Heart left ventricle (tissue), 16 donors: ENCODE measurements at regions of chr13 and their contacts with region 1.

Region 1: GRCh38 chr13:33610471-33611015 is 207.4 kb upstream of the RFC3 start:
- DNase-seq: peak; percentile 64 to 89 (median 85)
- ATAC-seq: peak; percentile 86 to 88 (median 87)
- H3K4me3 ChIP-seq: peak overlapping the region in 11 of 12 donors; percentile 3 to 54 (median 40)
- H3K27ac ChIP-seq: peak overlapping the region; percentile 85 to 98 (median 92)
- H3K4me1 ChIP-seq: peaks cover 0 to 55% (median 27%) of the 10 kb centered on the region in 12 donors
- H3K27me3 ChIP-seq: no peaks in the 10 kb centered on the region
- CTCF ChIP-seq: peak in 4 of 12 donors; percentile 11 to 38 (median 19)
- POLR2A ChIP-seq: no peak

Region 2: GRCh38 chr13:33548069-33548468 is 62.5 kb before region 1 on chr13:
- intact Hi-C with region 1: loop called in 2 of 10 experiments (anchors 5 kb)
- DNase-seq: no peak
- ATAC-seq: no peak
- H3K4me3 ChIP-seq: no peak overlapping the region
- H3K27ac ChIP-seq: peak overlapping the region in 1 of 12 donors; percentile 40
- H3K4me1 ChIP-seq: peaks cover 0 to 32% (median 13%) of the 10 kb centered on the region in 12 donors
- H3K27me3 ChIP-seq: no peaks in the 10 kb centered on the region
- CTCF ChIP-seq: no peak
- POLR2A ChIP-seq: no peak

Region 3: DNA sequence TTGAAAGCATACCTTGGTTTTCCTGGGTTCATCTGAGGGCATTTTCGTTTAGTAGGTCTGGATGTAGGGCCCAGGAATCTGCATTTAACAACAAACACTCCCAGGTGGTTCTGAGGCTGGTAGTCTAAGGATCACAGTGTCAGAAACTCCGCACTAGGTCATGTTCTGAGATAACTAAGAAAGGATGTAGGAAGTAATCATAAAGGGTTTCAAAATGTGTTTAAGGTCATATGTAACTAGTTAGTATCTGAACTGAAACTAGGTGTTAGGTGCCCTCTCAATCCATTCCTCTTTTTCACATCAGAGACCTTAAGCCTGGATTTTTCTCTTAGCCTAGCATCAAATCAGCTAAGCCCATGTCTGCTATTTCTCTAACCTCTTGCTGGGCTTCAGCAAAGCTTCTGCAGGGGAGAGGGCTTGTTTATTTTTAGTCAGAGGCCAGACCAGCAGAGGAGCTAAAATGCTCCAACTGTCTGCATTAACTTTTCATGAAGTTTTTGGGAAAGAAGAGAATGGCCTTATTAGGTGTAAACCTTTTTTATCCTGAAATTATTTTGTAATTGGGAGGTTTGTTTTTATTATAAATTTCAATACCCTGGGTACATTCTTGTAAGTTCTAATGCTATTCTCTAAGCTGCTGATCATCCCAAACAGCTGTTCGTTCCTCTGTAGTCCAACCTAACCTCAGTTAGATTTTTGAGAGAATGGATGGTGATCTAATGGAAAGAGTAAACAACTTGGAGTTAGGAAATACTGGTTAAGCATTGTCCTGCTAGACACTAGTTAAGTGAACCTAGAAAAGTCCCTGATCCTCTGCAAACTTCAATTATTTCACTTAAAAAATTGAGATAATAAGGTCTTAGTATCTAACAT is 55.4 kb before region 1 on chr13:
- intact Hi-C with region 1: loop called in 1 of 10 experiments (anchors 5 kb)
- DNase-seq: no peak
- ATAC-seq: peak in 3 of 4 donors; percentile 20 to 45 (median 24)
- H3K4me3 ChIP-seq: no peak overlapping the region
- H3K27ac ChIP-seq: peak overlapping the region in 6 of 12 donors; percentile 7 to 43 (median 30)
- H3K4me1 ChIP-seq: peaks cover 0 to 12% (median under 1%) of the 10 kb centered on the region in 12 donors
- H3K27me3 ChIP-seq: no peaks in the 10 kb centered on the region
- CTCF ChIP-seq: no peak
- POLR2A ChIP-seq: no peak

Region 4: GRCh38 chr13:33678906-33679657 is 68.5 kb after region 1 on chr13:
- intact Hi-C with region 1: loop called in 6 of 10 experiments (anchors 2 to 5 kb)
- DNase-seq: peak; percentile 51 to 66 (median 61)
- ATAC-seq: peak in 3 of 4 donors; percentile 44 to 75 (median 67)
- H3K4me3 ChIP-seq: peak overlapping the region in 6 of 12 donors; percentile 7 to 37 (median 22)
- H3K27ac ChIP-seq: peak overlapping the region in 11 of 12 donors; percentile 16 to 73 (median 49)
- H3K4me1 ChIP-seq: peaks cover 0 to 44% (median 18%) of the 10 kb centered on the region in 12 donors
- H3K27me3 ChIP-seq: no peaks in the 10 kb centered on the region
- CTCF ChIP-seq: no peak
- POLR2A ChIP-seq: no peak

Region 5: GRCh38 chr13:34025746-34026145 is 415.2 kb after region 1 on chr13:
- intact Hi-C with region 1: no loop called
- DNase-seq: no peak
- ATAC-seq: no peak
- H3K4me3 ChIP-seq: no peak overlapping the region
- H3K27ac ChIP-seq: no peak overlapping the region
- H3K4me1 ChIP-seq: no peaks in the 10 kb centered on the region
- H3K27me3 ChIP-seq: no peaks in the 10 kb centered on the region
- CTCF ChIP-seq: no peak
- POLR2A ChIP-seq: no peak

Region 6: GRCh38 chr13:35566340-35566739 is 1955.8 kb after region 1 on chr13:
- intact Hi-C with region 1: loop called in 1 of 10 experiments (anchors 10 kb)
- DNase-seq: no peak
- ATAC-seq: no peak
- H3K4me3 ChIP-seq: no peak overlapping the region
- H3K27ac ChIP-seq: no peak overlapping the region
- H3K4me1 ChIP-seq: no peaks in the 10 kb centered on the region
- H3K27me3 ChIP-seq: no peaks in the 10 kb centered on the region
- CTCF ChIP-seq: no peak
- POLR2A ChIP-seq: no peak